Activated CD8-positive, alpha-beta T cell treated with anti-CD3 and anti-CD28 coated beads, Interleukin-2, amount 10 ng/mL, durations not matched to agents 7 days and 5 days (primary cell): ENCODE measurements at regions of chr16 and their contacts with region 1.

Region 1: GRCh38 chr16:30052671-30053372 is 12.7 kb upstream of the ALDOA start:
- DNase-seq: peak; percentile 96
- ATAC-seq: peak; percentile 75
- H3K4me3 Mint-ChIP-seq: peak overlapping the region; percentile 83
- H3K27ac Mint-ChIP-seq: peak overlapping the region; percentile 89
- H3K4me1 Mint-ChIP-seq: peaks cover 33% of the 10 kb centered on the region
- H3K27me3 Mint-ChIP-seq: peaks cover 3% of the 10 kb centered on the region

Region 2: DNA sequence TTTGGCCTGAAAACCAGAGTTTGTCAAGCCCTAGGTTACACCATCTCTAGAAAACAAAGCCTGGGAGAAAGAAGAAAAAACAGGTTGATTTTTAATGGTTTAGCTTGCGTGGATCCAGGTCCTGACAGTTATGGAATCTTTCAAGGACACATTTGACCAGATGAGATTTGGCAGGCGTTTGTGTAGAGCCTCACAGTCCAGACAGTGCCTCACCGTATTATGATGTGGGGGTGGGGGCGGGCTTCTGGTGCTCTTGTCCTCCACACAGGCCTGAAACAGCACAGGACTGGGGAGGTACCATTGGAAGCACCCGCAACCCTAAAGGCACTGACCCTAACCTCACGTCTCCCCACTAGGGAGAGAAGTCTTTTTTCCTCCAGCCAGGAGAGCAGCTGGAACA is 213.0 kb before region 1 on chr16:
- CTCF ChIA-PET with region 1: no interaction called
- POLR2A ChIA-PET with region 1: no interaction called
- DNase-seq: no peak
- ATAC-seq: no peak
- H3K4me3 Mint-ChIP-seq: no peak overlapping the region
- H3K27ac Mint-ChIP-seq: no peak overlapping the region
- H3K4me1 Mint-ChIP-seq: no peaks in the 10 kb centered on the region
- H3K27me3 Mint-ChIP-seq: no peaks in the 10 kb centered on the region

Region 3: DNA sequence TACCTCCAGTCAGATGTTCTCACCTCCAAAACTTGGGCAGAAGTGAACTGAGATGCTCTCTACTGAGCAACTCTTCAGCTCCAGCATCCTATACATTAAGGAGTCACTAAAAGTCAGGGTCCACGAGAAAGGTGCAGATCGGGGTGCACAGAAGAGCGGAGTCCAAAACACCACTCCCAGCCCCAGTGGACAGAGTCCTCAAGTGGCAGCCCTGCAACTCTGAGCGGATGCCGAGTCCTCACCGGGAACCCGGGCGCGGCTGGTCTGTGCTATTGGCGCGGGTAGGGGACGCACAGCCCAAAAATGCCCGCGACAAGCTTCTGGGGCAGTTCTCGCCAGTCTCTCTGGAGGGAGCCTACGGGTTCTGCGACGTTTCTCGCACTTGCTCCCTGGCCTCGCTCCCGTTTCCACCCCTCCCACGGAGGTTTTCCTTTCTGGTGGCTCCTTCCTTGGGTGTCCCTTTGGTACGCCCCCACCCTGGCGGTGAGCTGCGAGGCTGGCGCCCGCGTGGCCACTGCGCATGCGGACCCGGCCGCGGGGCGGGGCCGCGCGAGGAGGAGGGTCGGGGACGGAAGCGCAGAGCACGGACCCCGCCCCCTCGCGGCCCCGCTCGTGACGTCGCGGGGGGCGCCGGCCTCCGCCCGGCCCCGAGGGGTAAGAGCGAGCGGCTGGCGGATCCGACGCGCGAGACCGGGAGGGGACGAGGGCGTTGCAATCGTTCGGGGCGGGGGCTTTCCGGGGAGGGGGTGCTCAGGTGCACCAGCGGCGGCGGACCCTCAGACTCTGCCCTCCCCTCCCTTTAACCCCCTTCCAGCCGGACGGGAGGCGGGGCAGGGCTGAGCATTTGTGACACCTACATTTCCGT is 91.1 kb before region 1 on chr16 and contains the start of gene TMEM219:
- CTCF ChIA-PET with region 1: no interaction called
- POLR2A ChIA-PET with region 1: no interaction called
- DNase-seq: peak; percentile 94
- ATAC-seq: peak; percentile 95
- H3K4me3 Mint-ChIP-seq: peak within 1 kb of the TSS; percentile 82
- H3K27ac Mint-ChIP-seq: peak within 1 kb of the TSS; percentile 84
- H3K4me1 Mint-ChIP-seq: peaks cover 20% of the 10 kb centered on the region
- H3K27me3 Mint-ChIP-seq: no peaks in the 10 kb centered on the region
- total RNA-seq, gene TMEM219: 57.8 to 61.0 TPM

Region 4: GRCh38 chr16:30032083-30032819 is 20.6 kb before region 1 on chr16:
- CTCF ChIA-PET with region 1: interaction called, 48 read pairs
- POLR2A ChIA-PET with region 1: no interaction called
- DNase-seq: peak; percentile 81
- ATAC-seq: peak; percentile 66
- H3K4me3 Mint-ChIP-seq: no peak overlapping the region
- H3K27ac Mint-ChIP-seq: no peak overlapping the region
- H3K4me1 Mint-ChIP-seq: peaks cover 15% of the 10 kb centered on the region
- H3K27me3 Mint-ChIP-seq: peaks cover 44% of the 10 kb centered on the region

Region 5: GRCh38 chr16:30041846-30042267 is 11.0 kb before region 1 on chr16:
- CTCF ChIA-PET with region 1: interaction called, 10 read pairs
- POLR2A ChIA-PET with region 1: no interaction called
- DNase-seq: no peak
- ATAC-seq: no peak
- H3K4me3 Mint-ChIP-seq: no peak overlapping the region
- H3K27ac Mint-ChIP-seq: no peak overlapping the region
- H3K4me1 Mint-ChIP-seq: no peaks in the 10 kb centered on the region
- H3K27me3 Mint-ChIP-seq: peaks cover 13% of the 10 kb centered on the region

Region 6: DNA sequence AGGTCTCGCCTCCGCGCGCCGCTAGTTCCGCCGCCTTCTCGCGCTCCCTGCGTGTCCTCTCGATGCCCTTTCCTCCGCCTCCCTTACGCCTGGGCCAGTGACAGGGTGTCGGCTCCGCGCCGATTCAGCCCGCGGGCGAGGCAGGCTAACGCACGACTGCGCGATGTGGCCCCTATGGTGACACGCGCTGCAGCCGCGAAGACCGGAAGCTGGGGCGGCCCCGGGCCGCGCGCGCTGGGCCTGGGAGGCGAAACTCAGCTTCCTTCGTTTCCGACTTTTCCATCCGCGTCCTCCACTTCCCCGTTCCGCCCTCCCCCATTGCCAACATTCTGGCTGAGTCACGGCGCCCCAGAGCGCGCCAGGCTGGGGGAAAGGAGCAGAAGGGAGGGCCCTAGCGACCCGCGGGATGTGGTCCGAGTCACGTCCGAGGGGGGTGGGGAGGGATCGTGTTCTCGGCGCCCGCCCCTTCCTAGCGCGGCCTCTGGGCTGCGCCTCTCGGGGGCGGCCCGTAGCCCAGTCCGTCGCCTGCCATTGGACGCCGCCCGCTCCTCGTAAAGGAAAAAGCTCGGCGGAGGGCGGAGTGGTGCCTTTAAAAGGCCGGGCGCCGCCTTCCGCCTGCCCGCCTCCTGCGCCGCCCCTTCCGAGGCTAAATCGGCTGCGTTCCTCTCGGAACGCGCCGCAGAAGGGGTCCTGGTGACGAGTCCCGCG is 12.5 kb after region 1 on chr16 and contains the start of gene ALDOA:
- CTCF ChIA-PET with region 1: interaction called, 82 read pairs
- POLR2A ChIA-PET with region 1: interaction called, 13 read pairs
- DNase-seq: peak; percentile 98
- ATAC-seq: peak; percentile 88
- H3K4me3 Mint-ChIP-seq: peak within 1 kb of the TSS; percentile 99
- H3K27ac Mint-ChIP-seq: peak within 1 kb of the TSS; percentile 98
- H3K4me1 Mint-ChIP-seq: peaks cover 44% of the 10 kb centered on the region
- H3K27me3 Mint-ChIP-seq: no peaks in the 10 kb centered on the region
- total RNA-seq, gene ALDOA: 1,738 to 1,843 TPM

Region 7: DNA sequence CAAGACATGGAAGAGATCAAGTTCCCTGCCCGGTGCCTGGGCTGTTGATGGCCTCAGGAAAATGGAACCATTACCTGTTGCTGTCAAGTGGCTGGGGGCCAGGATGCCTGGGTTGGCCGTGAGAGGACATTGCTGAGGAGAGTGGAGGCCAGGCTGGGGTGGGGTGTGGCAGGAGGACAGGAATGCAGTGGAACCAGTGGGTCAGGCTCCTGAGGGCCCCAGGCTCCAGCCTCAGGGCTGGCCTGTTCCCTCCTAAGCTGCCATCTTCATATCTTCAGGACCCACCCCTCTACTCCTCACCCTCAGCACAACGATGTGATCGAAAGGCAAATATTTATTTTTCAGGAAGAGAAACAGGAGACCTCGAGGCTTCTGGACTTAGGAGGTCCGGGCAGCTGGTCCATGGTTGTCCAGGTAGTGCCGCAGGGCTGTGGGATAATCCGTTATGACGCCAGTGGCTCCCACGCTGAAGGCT is 51.7 kb after region 1 on chr16:
- CTCF ChIA-PET with region 1: no interaction called
- POLR2A ChIA-PET with region 1: no interaction called
- DNase-seq: no peak
- ATAC-seq: no peak
- H3K4me3 Mint-ChIP-seq: no peak overlapping the region
- H3K27ac Mint-ChIP-seq: no peak overlapping the region
- H3K4me1 Mint-ChIP-seq: no peaks in the 10 kb centered on the region
- H3K27me3 Mint-ChIP-seq: no peaks in the 10 kb centered on the region